Caco-2 (cell line): ENCODE measurements at regions of chr5 and their contacts with region 1.

Region 1: DNA sequence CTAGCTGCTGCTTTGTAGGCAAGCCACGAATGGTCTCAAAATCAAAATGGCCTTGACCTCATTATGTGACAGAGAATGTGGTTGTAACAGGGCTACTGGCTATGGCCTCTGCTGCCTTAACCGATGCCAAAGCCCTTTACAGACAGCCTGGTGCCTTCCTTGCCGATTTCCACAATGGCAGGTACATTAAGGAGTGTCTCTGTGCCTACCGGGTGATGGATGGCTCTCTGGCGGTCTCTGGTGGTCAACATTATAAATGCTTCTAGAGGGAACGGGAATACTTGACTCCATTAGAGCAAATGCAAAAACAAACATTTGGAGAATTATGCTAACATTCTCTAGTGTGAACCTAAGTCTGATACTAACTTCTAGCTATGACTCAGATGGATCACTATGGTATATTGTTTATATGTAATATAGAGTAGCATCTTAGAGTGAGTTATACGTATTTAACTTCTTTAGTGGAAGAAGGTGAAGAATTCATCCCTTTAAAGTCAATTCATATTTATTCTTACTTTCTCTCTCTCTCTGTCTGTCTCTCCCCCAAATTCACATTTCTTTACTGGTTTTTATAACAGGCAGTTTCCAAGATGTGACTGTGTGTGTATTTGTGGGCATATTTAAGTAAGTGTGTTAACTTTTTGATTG is 52.5 kb downstream of the RPS23 start:
- DNase-seq: peak; percentile 62 to 77
- H3K4me3 ChIP-seq: no peak overlapping the region
- H3K4me3 Mint-ChIP-seq: no peak overlapping the region
- H3K27ac Mint-ChIP-seq: no peak overlapping the region
- H3K4me1 ChIP-seq: no peaks in the 10 kb centered on the region
- H3K4me1 Mint-ChIP-seq: no peaks in the 10 kb centered on the region
- H3K27me3 ChIP-seq: no peaks in the 10 kb centered on the region
- H3K27me3 Mint-ChIP-seq: no peaks in the 10 kb centered on the region
- CTCF ChIP-seq: peak; percentile 78 to 81

Region 2: GRCh38 chr5:81425569-81425968 is 800.1 kb before region 1 on chr5:
- CTCF ChIA-PET with region 1: no interaction called
- POLR2A ChIA-PET with region 1: no interaction called
- intact Hi-C with region 1: loop called (anchors 1 kb)
- DNase-seq: peak in 1 of 2 experiments; percentile 25
- H3K4me3 ChIP-seq: no peak overlapping the region
- H3K4me3 Mint-ChIP-seq: no peak overlapping the region
- H3K27ac Mint-ChIP-seq: no peak overlapping the region
- H3K4me1 ChIP-seq: peaks cover 19% of the 10 kb centered on the region
- H3K4me1 Mint-ChIP-seq: peaks cover 19% of the 10 kb centered on the region
- H3K27me3 ChIP-seq: no peaks in the 10 kb centered on the region
- H3K27me3 Mint-ChIP-seq: no peaks in the 10 kb centered on the region
- CTCF ChIP-seq: peak; percentile 45 to 57

Region 3: DNA sequence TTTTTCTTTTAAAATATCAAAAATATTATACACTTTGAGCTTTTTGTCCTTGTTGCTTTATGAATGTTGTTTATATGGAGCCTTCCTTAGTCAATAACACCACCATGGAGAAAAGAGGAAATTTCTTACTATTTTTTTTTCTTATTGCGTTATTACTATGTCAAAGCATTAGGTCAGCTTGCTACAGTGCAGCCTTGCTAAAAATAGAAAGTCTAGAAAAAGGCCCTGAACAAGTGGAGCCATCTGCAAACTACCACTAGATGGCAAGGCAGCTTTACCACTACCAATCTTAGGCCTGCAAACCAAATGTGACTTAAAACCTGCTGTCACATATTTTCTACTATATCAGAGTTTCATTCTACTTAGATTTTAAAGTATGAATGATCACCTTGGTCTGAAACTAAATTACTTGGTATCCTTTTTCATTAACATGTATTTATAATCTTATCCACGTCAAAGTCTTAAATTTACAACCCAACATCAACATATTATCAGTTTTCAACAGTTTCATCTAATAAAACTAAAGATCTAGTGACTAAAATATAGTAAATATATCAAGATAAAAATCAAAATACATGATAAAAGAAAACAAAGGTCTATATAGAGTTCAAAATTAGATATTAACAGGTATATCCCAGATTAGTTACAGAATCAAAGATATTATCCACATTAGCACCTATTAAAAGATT is 718.6 kb before region 1 on chr5:
- CTCF ChIA-PET with region 1: no interaction called
- POLR2A ChIA-PET with region 1: no interaction called
- intact Hi-C with region 1: loop called (anchors 1 kb)
- DNase-seq: peak; percentile 47 to 63
- H3K4me3 ChIP-seq: no peak overlapping the region
- H3K4me3 Mint-ChIP-seq: no peak overlapping the region
- H3K27ac Mint-ChIP-seq: no peak overlapping the region
- H3K4me1 ChIP-seq: no peaks in the 10 kb centered on the region; the same call in 1 of the 2 replicates
- H3K4me1 Mint-ChIP-seq: peaks cover 7% of the 10 kb centered on the region
- H3K27me3 ChIP-seq: no peaks in the 10 kb centered on the region
- H3K27me3 Mint-ChIP-seq: peaks cover 2% of the 10 kb centered on the region
- CTCF ChIP-seq: peak; percentile 65 to 96

Region 4: DNA sequence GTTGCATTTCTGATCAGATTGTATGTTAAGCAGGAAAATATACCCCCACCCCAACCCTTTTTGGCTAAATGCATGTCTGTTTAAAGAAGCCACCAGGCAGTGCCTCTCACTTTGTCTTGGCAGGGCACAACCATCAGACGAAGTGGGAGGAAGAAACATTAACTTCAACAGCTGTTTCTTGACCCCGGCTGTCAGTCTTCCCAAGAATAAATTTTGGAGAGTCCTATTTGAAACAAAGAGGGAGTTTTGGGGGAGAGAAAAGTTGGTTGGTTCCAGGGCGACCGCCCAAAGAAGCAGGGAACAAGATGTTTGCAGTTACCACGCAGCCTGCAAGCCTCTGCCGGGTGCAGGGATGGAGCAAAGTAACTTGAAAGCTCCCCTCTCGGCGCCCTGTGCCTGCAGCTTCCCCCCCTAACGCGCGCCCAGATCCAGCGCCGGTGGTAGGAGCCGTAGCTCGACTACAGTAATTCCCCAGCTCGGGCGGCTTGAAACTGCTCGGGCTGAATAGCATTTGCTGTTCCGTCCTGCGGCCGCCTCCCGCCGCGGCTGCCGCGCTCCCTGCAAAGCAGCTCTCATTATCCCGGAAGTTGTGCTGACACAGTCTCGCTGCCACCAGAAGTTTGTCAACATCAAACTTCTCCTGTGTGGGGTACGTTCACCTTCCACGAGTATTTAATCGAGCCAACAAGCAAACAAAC is 374.0 kb before region 1 on chr5:
- CTCF ChIA-PET with region 1: no interaction called
- POLR2A ChIA-PET with region 1: no interaction called
- intact Hi-C with region 1: loop called (anchors 10 kb)
- DNase-seq: peak; percentile 92 to 95
- H3K4me3 ChIP-seq: peak overlapping the region; percentile 35
- H3K4me3 Mint-ChIP-seq: peak overlapping the region; percentile 86
- H3K27ac Mint-ChIP-seq: peak overlapping the region; percentile 95
- H3K4me1 ChIP-seq: peaks cover 8% of the 10 kb centered on the region
- H3K4me1 Mint-ChIP-seq: peaks cover 11% of the 10 kb centered on the region
- H3K27me3 ChIP-seq: no peaks in the 10 kb centered on the region
- H3K27me3 Mint-ChIP-seq: no peaks in the 10 kb centered on the region
- CTCF ChIP-seq: no peak

Region 5: DNA sequence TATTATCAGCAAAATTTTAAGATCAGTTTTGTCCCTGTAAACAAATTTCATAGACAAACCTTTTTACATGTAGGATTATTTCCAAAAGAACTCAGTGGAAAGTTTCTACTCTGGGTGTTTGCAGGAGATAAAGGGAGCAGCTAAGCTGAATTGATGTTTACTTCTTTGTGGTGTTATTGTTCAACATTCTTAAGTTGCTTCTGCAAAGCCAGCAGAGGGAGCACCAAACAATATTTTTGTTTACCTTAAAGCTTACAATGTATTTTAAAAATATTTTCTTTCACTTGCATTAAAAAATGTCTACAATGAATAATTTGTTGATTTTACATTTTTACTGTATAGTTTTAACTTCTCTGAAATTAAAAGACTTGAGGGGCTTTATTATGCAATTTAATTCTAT is 118.4 kb before region 1 on chr5:
- CTCF ChIA-PET with region 1: no interaction called
- POLR2A ChIA-PET with region 1: no interaction called
- intact Hi-C with region 1: loop called (anchors 2 kb)
- DNase-seq: no peak
- H3K4me3 ChIP-seq: no peak overlapping the region
- H3K4me3 Mint-ChIP-seq: no peak overlapping the region
- H3K27ac Mint-ChIP-seq: no peak overlapping the region
- H3K4me1 ChIP-seq: peaks cover 9% of the 10 kb centered on the region; the same call in 1 of the 2 replicates
- H3K4me1 Mint-ChIP-seq: peaks cover 14% of the 10 kb centered on the region
- H3K27me3 ChIP-seq: no peaks in the 10 kb centered on the region
- H3K27me3 Mint-ChIP-seq: no peaks in the 10 kb centered on the region
- CTCF ChIP-seq: peak; percentile 21 to 25

Region 6: GRCh38 chr5:82174128-82174918 is 51.3 kb before region 1 on chr5:
- CTCF ChIA-PET with region 1: no interaction called
- POLR2A ChIA-PET with region 1: no interaction called
- intact Hi-C with region 1: loop called (anchors 1 kb)
- DNase-seq: peak; percentile 68 to 75
- H3K4me3 ChIP-seq: no peak overlapping the region
- H3K4me3 Mint-ChIP-seq: no peak overlapping the region
- H3K27ac Mint-ChIP-seq: no peak overlapping the region
- H3K4me1 ChIP-seq: no peaks in the 10 kb centered on the region
- H3K4me1 Mint-ChIP-seq: no peaks in the 10 kb centered on the region
- H3K27me3 ChIP-seq: no peaks in the 10 kb centered on the region
- H3K27me3 Mint-ChIP-seq: no peaks in the 10 kb centered on the region
- CTCF ChIP-seq: peak; percentile 76 to 77